Ascending aorta (tissue), 2 donors: ENCODE measurements at regions of chr19 and their contacts with region 1.

Region 1: GRCh38 chr19:47391510-47392223 is 27.7 kb downstream of the MEIS3 start:
- DNase-seq: peak in 1 of 2 donors; percentile 80
- H3K4me3 ChIP-seq: no peak overlapping the region
- H3K27ac ChIP-seq: no peak overlapping the region
- H3K4me1 ChIP-seq: no peaks in the 10 kb centered on the region
- H3K27me3 ChIP-seq: no peaks in the 10 kb centered on the region
- CTCF ChIP-seq: peak; percentile 64 to 85 (median 80)

Region 2: GRCh38 chr19:47296036-47296435 is 95.6 kb before region 1 on chr19:
- intact Hi-C with region 1: loop called (anchors 1 kb)
- DNase-seq: peak in 1 of 2 donors; percentile 86
- H3K4me3 ChIP-seq: no peak overlapping the region
- H3K27ac ChIP-seq: no peak overlapping the region
- H3K4me1 ChIP-seq: no peaks in the 10 kb centered on the region
- H3K27me3 ChIP-seq: no peaks in the 10 kb centered on the region
- CTCF ChIP-seq: peak; percentile 72 to 75 (median 73)